ENCODE measurements at regions of chr15 and their contacts with region 1.

Region 1: DNA sequence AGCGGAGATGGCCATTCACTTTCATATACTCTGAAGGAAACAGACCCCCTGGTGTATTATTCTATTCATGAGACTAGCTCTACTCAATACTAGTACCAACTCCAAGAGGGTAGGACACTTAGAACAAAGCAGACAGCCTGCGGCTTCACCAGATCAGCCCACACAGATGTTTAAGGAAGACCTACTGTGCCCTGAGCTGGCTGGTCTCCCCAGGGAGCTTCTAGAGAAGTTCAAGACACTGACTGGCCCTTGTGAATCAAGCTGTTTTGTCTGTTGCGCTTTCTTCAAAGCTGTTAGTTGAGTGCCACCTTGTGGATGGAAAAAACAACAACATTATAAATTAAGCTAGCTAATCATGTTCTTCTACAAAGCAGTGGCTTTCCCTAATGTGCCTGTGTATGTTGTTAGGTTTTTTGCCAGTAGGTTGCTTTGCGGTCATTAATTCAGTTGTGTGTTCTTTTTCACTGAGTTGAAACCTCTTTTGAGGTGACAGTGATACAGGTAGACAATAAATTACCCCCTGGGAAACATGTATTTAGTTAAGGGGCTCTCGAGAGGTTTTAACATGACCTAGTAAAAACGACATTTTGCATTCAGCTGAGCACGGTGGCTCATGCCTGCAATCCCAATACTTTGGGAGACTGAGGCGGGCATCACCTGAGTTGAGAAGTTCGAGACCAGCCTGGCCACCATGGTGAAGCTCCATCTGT is 64.2 kb upstream of the MYZAP start:
- DNase-seq: peak in 4 of 14 experiments; percentile 10 to 60 (median 48)
- ATAC-seq: no peak
- H3K4me3 ChIP-seq: no peak overlapping the region
- H3K4me3 Mint-ChIP-seq: no peak overlapping the region
- H3K27ac ChIP-seq: no peak overlapping the region
- H3K27ac Mint-ChIP-seq: no peak overlapping the region
- H3K4me1 ChIP-seq: no peaks in the 10 kb centered on the region
- H3K4me1 Mint-ChIP-seq: no peaks in the 10 kb centered on the region
- H3K27me3 ChIP-seq: peaks cover 0 to 5% of the 10 kb centered on the region in 2 experiments
- H3K27me3 Mint-ChIP-seq: peaks cover 7% of the 10 kb centered on the region
- CTCF ChIP-seq: peak; percentile 49

Region 2: GRCh38 chr15:56491110-56491722 is 1036.3 kb before region 1 on chr15:
- CTCF ChIA-PET with region 1: interaction called, 4 read pairs
- POLR2A ChIA-PET with region 1: interaction called, 4 read pairs
- intact Hi-C with region 1: loop called (anchors 1 to 5 kb)
- DNase-seq: peak; percentile 10 to 71 (median 29)
- ATAC-seq: peak; percentile 48
- H3K4me3 ChIP-seq: no peak overlapping the region
- H3K4me3 Mint-ChIP-seq: no peak overlapping the region
- H3K27ac ChIP-seq: no peak overlapping the region
- H3K27ac Mint-ChIP-seq: no peak overlapping the region
- H3K4me1 ChIP-seq: no peaks in the 10 kb centered on the region
- H3K4me1 Mint-ChIP-seq: no peaks in the 10 kb centered on the region
- H3K27me3 ChIP-seq: peaks cover 0 to 3% of the 10 kb centered on the region in 2 experiments
- H3K27me3 Mint-ChIP-seq: no peaks in the 10 kb centered on the region
- CTCF ChIP-seq: peak; percentile 69

Region 3: GRCh38 chr15:56496635-56497034 is 1030.9 kb before region 1 on chr15:
- CTCF ChIA-PET with region 1: interaction called, 5 read pairs
- POLR2A ChIA-PET with region 1: interaction called, 4 read pairs
- intact Hi-C with region 1: loop called (anchors 1 to 5 kb)
- DNase-seq: peak in 3 of 14 experiments; percentile 44 to 65 (median 58)
- ATAC-seq: peak; percentile 49
- H3K4me3 ChIP-seq: no peak overlapping the region
- H3K4me3 Mint-ChIP-seq: no peak overlapping the region
- H3K27ac ChIP-seq: no peak overlapping the region
- H3K27ac Mint-ChIP-seq: no peak overlapping the region
- H3K4me1 ChIP-seq: no peaks in the 10 kb centered on the region
- H3K4me1 Mint-ChIP-seq: peaks cover 4% of the 10 kb centered on the region
- H3K27me3 ChIP-seq: peaks cover 0 to 4% of the 10 kb centered on the region in 2 experiments
- H3K27me3 Mint-ChIP-seq: peaks cover 15% of the 10 kb centered on the region
- CTCF ChIP-seq: peak; percentile 72

Region 4: DNA sequence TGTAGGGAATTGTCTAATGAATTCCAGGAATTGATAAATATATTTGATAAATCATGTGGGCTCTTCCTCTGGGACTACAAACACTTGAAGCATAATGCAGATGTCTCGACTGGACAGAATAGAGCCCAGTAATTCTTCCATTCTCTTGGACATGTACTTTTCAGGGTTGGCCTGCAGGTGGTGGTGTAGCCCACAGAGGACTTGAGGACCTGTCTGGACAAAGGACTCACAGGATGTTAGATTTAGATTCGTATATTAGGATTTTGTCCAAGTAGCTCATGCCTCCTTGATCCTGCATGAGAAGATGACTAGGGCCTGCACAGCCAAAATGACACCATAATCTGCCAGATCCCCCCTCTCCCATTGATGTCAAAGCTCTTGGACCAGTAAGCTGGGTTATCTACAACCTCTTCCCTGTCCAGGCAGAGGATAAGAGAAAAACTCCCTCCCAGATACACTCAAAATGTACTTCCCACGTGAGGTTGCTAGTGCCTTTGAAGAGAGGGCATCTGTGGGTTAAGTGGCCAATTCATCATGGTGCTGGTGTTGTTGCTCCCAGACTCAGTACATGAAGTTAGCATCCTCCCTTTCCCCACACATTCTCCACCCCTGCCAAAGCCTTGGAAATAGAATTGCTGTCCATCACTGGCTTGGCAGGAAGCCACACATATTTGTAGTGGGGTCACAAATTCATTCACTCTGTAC is 705.7 kb before region 1 on chr15:
- CTCF ChIA-PET with region 1: no interaction called
- POLR2A ChIA-PET with region 1: no interaction called
- intact Hi-C with region 1: loop called in 1 of 2 experiments (anchors 2 kb)
- DNase-seq: peak; percentile 15 to 68 (median 38)
- ATAC-seq: no peak
- H3K4me3 ChIP-seq: no peak overlapping the region
- H3K4me3 Mint-ChIP-seq: no peak overlapping the region
- H3K27ac ChIP-seq: no peak overlapping the region
- H3K27ac Mint-ChIP-seq: no peak overlapping the region
- H3K4me1 ChIP-seq: no peaks in the 10 kb centered on the region
- H3K4me1 Mint-ChIP-seq: no peaks in the 10 kb centered on the region
- H3K27me3 ChIP-seq: no peaks in the 10 kb centered on the region
- H3K27me3 Mint-ChIP-seq: no peaks in the 10 kb centered on the region
- CTCF ChIP-seq: peak; percentile 47

Region 5: DNA sequence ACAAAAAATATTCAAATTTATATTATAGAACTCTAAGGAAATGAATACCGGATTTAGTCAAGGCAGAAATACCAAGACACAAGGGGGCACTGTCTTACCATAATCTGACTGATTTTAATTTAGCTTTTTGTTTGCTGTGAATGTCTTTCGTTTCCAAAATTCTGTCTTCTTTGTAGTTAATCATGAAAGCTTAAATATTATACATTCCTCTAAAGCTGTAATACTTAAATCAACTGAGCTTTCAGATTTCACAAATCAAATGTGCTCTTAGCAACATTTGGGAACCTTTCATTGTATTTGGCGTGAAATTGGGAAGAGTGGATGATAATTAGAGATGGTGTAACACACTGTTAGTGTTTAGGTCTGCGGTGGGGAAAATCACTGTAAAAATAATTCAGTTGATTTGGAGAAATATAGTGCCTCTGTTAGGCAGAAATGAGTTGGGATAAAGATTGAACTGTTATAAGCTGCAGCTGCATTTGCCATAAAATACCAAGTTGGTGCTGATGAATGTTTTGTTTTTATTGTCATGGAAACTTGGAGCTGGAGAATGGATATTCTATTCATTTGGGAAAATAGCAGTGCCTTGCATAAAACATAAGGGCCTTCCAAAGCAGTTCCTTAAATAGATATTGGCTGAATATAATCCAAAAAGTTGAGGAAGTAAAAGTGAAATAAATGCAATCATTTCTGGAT is 380.9 kb before region 1 on chr15:
- CTCF ChIA-PET with region 1: interaction called, 4 read pairs
- POLR2A ChIA-PET with region 1: no interaction called
- intact Hi-C with region 1: loop called (anchors 2 to 5 kb)
- DNase-seq: peak in 4 of 14 experiments; percentile 15 to 52 (median 38)
- ATAC-seq: no peak
- H3K4me3 ChIP-seq: no peak overlapping the region
- H3K4me3 Mint-ChIP-seq: no peak overlapping the region
- H3K27ac ChIP-seq: no peak overlapping the region
- H3K27ac Mint-ChIP-seq: no peak overlapping the region
- H3K4me1 ChIP-seq: no peaks in the 10 kb centered on the region
- H3K4me1 Mint-ChIP-seq: peaks cover 9% of the 10 kb centered on the region
- H3K27me3 ChIP-seq: no peaks in the 10 kb centered on the region
- H3K27me3 Mint-ChIP-seq: no peaks in the 10 kb centered on the region
- CTCF ChIP-seq: peak; percentile 62

Region 6: DNA sequence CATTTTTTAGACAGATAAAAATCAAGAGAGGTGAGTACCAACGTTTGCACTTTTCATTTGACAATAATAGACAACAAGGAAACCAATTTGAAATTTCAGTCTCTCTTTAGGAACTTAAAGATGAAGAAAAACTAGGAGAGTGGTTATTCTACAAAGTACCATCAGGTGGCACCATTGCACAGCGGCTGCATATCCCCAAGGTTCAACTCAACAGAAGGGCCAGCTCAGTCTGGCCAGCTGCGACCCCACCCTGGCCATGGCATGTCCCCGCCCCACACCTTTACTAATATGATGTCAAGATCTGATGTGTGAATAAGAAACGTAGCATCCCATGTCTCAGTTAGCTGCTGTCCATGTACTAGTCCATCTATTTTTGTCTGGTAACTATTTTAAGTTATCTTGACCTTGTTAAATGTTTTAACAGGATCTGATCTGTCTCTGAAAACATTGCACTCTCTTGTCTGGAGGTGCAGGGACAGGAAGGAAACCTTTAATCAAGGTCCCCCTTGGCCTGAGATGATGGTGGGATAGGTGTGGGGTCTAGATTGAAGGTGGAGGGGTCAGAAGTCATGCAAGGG is 186.8 kb before region 1 on chr15:
- CTCF ChIA-PET with region 1: interaction called, 5 read pairs
- POLR2A ChIA-PET with region 1: no interaction called
- intact Hi-C with region 1: loop called (anchors 1 kb)
- DNase-seq: peak in 6 of 14 experiments; percentile 10 to 57 (median 39)
- ATAC-seq: no peak
- H3K4me3 ChIP-seq: no peak overlapping the region
- H3K4me3 Mint-ChIP-seq: no peak overlapping the region
- H3K27ac ChIP-seq: no peak overlapping the region
- H3K27ac Mint-ChIP-seq: no peak overlapping the region
- H3K4me1 ChIP-seq: no peaks in the 10 kb centered on the region
- H3K4me1 Mint-ChIP-seq: no peaks in the 10 kb centered on the region
- H3K27me3 ChIP-seq: no peaks in the 10 kb centered on the region
- H3K27me3 Mint-ChIP-seq: no peaks in the 10 kb centered on the region
- CTCF ChIP-seq: peak; percentile 77

Region 7: DNA sequence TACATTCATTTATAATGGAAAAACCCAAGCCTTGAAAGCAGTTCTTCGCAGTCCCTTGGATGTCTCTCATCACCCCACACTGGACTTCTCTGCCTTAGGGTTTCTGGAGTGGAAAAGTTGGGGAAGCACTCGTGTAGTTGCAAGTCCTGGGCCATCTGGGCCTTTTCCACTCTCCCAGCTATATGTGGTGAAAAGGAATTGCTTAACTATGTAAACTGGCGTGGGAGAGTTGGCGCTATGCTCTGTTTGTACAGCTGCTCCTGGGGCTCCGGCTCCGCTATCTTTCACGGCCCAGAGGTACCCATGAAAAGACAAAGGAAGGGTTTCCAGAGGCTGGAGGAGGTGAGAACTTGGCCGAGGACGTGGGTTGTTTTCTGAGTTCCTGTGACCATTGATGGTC is 16.9 kb before region 1 on chr15:
- CTCF ChIA-PET with region 1: no interaction called
- POLR2A ChIA-PET with region 1: no interaction called
- intact Hi-C with region 1: no loop called
- DNase-seq: no peak
- ATAC-seq: no peak
- H3K4me3 ChIP-seq: no peak overlapping the region
- H3K4me3 Mint-ChIP-seq: no peak overlapping the region
- H3K27ac ChIP-seq: no peak overlapping the region
- H3K27ac Mint-ChIP-seq: no peak overlapping the region
- H3K4me1 ChIP-seq: no peaks in the 10 kb centered on the region
- H3K4me1 Mint-ChIP-seq: no peaks in the 10 kb centered on the region
- H3K27me3 ChIP-seq: no peaks in the 10 kb centered on the region
- H3K27me3 Mint-ChIP-seq: peaks cover 11% of the 10 kb centered on the region
- CTCF ChIP-seq: no peak